ENCODE measurements at regions of chr5 and their contacts with region 1.

Region 1: DNA sequence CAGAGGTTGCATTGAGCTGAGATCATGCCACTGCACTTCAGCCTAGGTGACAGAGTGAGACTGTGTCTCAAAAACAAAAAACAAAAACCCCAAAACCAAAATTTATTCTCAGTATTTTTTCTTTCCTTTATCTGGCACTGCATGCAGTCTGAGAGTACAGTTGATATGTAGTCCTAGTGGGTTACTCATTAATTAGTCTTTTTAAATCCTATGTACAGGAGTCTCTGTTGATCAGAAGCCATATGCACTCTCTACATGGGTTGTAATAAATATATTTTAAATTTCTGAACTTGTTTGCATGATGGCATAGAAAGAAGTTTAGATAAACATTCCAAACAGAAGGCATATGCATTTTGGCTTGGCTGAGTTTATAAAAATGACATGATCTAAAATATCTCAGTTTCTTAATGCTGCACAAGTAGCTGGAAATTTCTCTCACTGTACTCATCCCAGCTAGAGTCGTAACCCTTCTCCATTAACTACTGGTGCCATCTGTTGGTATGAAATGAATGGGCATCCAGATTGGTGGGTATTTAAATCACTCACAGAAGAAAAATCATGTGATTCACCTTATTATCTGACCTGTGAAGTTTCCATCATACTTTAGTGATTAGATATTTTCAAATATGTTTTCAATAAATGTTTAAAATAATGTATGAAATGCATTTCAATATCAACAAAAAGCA is 284.8 kb downstream of the CTNND2 start:
- DNase-seq: peak in 8 of 42 donors; percentile 25 to 73 (median 48)

Region 2: GRCh38 chr5:11903614-11904269 is 284.3 kb after region 1 on chr5:
- intact Hi-C with region 1: loop called (anchors 10 kb)
- DNase-seq: peak in 39 of 42 donors; percentile 19 to 82 (median 64)